ENCODE measurements at regions of chr7 and their contacts with region 1.

Region 1: GRCh38 chr7:100556541-100556940 is 17.2 kb downstream of the SAP25 start:
- DNase-seq: no peak
- H3K4me3 Mint-ChIP-seq: no peak overlapping the region
- H3K27ac Mint-ChIP-seq: no peak overlapping the region
- H3K4me1 Mint-ChIP-seq: peaks cover 11% of the 10 kb centered on the region
- H3K27me3 Mint-ChIP-seq: no peaks in the 10 kb centered on the region

Region 2: DNA sequence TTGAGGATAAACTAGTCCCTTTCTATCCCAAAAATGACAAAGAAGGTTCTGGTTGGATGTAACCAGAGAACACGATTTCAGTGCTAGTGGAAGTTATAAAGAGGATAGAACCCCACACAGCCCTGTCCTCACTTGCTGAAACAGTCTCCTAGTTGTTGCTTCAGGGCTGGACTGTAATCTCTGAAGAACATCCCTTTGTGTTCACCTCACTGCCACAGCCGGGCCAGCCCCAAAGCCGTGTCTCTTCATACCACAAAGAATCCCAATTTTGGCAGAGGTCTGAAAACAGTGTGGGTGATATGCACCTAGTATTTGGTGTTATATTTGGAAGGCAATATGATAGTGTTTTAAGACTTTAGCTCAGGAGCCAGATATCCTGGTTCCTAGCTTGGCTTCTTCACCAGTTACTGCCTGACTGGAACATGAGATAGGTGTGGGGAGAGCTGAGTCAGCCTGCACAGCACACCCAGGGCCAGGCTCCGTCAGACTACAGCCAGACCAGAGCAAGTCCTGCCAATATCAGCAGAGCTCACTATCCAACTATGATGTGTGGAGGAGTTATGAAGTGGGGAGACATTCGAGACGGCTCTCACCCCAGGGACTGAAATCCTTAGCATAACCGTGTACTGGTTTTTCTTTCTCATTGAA is 793.7 kb before region 1 on chr7:
- CTCF ChIA-PET with region 1: no interaction called
- POLR2A ChIA-PET with region 1: no interaction called
- intact Hi-C with region 1: no loop called
- DNase-seq: no peak
- H3K4me3 Mint-ChIP-seq: no peak overlapping the region
- H3K27ac Mint-ChIP-seq: no peak overlapping the region
- H3K4me1 Mint-ChIP-seq: peaks cover 4% of the 10 kb centered on the region
- H3K27me3 Mint-ChIP-seq: peaks cover 1% of the 10 kb centered on the region

Region 3: DNA sequence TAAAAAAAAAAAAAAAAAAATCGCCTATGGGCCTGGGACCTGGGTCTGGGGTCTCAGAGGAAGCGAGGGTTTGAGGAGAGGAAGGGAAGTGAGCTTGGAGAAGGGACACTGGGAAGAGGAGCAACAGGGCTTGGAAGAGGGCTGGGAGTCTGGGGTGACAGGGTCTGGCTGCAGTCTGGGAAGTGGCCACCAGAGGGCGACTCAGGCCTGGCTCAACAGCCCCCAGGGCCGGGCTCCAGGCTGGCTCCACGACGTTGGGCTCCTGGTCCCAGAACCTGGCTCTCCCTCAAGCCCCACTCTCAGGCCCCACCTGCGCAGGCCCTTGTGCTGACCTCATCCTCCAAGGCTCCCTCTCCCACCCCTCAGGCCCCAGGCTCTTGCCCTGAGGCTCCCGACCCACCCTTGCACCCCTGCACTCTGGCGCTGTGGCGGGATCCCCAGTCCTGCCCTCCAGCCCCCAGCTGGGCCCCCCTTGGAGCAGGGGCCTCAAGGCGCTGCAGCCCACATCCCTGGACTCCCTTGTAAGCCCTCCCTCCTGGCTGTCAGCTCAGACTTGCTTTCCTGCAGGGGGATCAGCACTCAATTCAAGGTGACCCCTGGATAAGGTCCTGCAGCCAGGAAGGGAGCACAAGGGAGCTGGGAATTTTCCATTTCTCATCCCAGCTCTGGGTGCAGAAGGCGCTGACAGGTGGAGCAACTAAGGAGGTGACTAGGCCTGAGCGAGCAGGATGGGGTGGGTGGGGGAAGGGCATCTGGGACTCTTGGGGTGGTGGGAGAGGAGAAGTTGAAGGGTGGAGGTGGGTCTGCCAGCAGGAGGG is 87.1 kb before region 1 on chr7:
- CTCF ChIA-PET with region 1: interaction called, 104 read pairs
- POLR2A ChIA-PET with region 1: no interaction called
- intact Hi-C with region 1: loop called (anchors 1 kb)
- DNase-seq: peak; percentile 88
- H3K4me3 Mint-ChIP-seq: no peak overlapping the region
- H3K27ac Mint-ChIP-seq: peak overlapping the region; percentile 45
- H3K4me1 Mint-ChIP-seq: peaks cover 27% of the 10 kb centered on the region
- H3K27me3 Mint-ChIP-seq: no peaks in the 10 kb centered on the region

Region 4: DNA sequence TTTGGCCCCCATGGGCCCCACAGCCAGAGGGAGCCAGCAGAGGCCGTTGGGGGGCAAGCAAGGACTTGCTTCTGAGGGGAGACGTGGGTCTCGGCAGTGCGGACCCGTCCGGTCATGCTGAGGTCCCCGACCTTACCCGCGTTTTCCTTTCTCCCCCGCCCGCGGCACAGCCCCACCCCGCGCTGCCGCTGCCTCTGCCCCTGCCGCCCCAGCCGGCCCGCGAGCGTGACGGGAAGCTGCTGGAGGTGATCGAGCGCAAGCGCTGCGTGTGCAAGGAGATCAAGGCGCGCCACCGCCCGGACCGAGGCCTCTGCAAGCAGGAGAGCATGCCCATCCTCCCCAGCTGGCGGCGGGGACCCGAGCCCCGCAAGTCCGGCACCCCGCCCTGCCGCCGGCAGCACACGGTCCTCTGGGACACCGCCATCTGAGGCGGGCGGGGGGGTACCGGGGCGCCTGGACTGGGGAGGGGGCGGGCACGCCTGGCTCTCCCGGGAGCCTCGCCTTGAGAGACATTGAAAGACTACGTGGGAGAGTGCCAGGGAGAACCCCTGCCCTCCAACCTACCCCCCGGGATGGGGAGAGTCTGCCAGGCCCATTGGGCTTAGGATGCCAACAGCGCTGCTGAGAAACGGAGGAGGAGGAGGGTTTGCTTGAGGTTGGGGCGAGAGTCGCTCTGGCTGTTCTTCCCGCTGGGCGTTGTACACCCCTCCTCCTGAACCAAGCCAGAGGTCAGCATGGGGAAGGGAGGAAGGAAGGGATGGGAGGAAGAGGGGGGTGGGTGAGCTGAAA is 62.9 kb before region 1 on chr7:
- CTCF ChIA-PET with region 1: interaction called, 17 read pairs
- POLR2A ChIA-PET with region 1: no interaction called
- intact Hi-C with region 1: no loop called
- DNase-seq: peak; percentile 76
- H3K4me3 Mint-ChIP-seq: peak overlapping the region; percentile 64
- H3K27ac Mint-ChIP-seq: no peak overlapping the region
- H3K4me1 Mint-ChIP-seq: peaks cover 9% of the 10 kb centered on the region
- H3K27me3 Mint-ChIP-seq: peaks cover 1% of the 10 kb centered on the region

Region 5: DNA sequence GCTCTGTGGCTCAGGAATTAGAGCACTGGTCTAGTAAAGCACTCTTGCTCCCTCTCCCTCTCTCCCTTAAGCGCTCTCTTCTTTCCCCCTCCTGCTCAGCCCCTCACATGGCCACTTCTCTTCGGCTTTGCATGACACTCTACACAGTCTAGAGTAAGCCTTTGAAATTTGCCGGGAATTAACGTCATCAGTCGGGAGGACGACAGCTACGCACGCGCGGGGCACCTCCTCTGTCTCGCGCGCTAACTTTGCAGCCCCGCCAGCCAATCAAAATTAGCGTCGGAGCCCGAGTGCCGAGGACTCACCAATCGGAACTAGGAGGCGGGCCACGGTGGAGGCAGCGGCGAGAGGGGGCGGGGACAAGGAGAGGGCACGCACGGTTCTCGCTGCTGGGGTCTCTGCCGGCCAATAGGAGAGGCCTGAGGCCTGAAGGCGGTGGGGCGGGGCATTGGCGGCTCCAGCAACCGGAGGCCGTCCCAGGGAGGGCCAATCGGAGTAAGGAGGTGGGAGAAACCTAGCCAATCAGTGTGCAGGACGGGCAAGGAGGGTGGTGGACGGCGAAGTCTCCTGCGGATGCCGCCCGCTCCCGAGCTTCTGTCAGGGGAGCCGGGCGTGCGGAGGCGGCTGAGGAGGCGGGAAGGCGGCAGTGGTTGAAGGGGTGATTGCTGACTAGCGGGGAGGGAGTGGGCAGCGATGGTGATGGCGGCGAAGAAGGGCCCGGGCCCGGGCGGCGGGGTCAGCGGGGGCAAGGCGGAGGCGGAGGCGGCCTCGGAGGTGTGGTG is 17.7 kb before region 1 on chr7 and contains the start of gene AGFG2:
- CTCF ChIA-PET with region 1: interaction called, 132 read pairs
- POLR2A ChIA-PET with region 1: interaction called, 4 read pairs
- intact Hi-C with region 1: no loop called
- DNase-seq: peak; percentile 100
- H3K4me3 Mint-ChIP-seq: peak within 1 kb of the TSS; percentile 95
- H3K27ac Mint-ChIP-seq: peak within 1 kb of the TSS; percentile 90
- H3K4me1 Mint-ChIP-seq: peaks cover 41% of the 10 kb centered on the region
- H3K27me3 Mint-ChIP-seq: no peaks in the 10 kb centered on the region
- total RNA-seq, gene AGFG2: 60.9 to 62.5 TPM

Region 6: DNA sequence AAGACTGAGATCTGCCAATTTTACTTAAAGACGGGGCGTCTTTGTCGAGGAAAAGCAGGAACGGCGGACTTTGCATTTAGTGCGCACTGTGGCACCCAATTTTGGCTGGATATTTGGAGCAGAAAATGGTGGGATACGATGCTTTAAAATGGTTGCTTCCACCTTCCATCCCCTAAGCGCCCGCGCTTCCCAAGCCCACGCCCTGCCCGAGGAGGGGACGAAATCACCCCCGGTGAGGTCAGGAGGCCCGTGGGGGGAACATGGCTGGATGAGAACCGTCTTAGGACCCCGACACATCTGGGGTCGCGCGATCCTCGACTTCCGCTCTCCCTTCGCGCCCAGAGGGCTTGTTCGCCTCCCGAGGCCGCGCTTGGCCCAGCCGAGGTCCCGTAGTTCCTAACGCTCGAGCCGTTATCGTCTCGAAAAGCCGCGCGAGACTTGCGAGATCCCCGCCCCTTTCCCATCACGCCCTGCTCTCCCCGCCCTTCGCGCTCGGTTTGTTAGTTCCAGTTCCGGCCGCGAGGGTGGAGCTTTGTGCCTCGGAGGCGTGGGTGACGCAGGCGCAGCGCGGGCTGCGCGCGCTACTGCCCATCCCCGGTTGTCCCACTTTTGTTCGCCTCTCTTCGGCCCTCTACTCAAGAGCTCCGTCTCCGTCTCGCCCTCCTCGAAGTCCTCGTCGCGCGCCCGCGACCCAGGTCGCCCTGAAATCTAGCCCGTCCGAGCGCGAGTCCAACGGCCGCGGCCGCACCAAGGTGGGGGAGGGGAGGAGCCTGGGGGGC is 318.2 kb after region 1 on chr7 and contains the start of gene SRRT:
- CTCF ChIA-PET with region 1: no interaction called
- POLR2A ChIA-PET with region 1: no interaction called
- intact Hi-C with region 1: no loop called
- DNase-seq: peak; percentile 99
- H3K4me3 Mint-ChIP-seq: peak within 1 kb of the TSS; percentile 99
- H3K27ac Mint-ChIP-seq: peak within 1 kb of the TSS; percentile 100
- H3K4me1 Mint-ChIP-seq: peaks cover 43% of the 10 kb centered on the region
- H3K27me3 Mint-ChIP-seq: no peaks in the 10 kb centered on the region
- total RNA-seq, gene SRRT: 209 to 223 TPM

Measured in activated CD4-positive, alpha-beta memory T cell treated with anti-CD3 and anti-CD28 coated beads for 36 hours (primary cell).